Activated CD8-positive, alpha-beta T cell treated with anti-CD3 and anti-CD28 coated beads, Interleukin-2, amount 10 ng/mL, durations not matched to agents 7 days and 5 days (primary cell): ENCODE measurements at regions of chr16 and their contacts with region 1.

Region 1: GRCh38 chr16:10918294-10919002 is 23.8 kb downstream of the DEXI start:
- DNase-seq: peak; percentile 89
- ATAC-seq: peak; percentile 83
- H3K4me3 Mint-ChIP-seq: no peak overlapping the region
- H3K27ac Mint-ChIP-seq: no peak overlapping the region
- H3K4me1 Mint-ChIP-seq: peaks cover 6% of the 10 kb centered on the region
- H3K27me3 Mint-ChIP-seq: no peaks in the 10 kb centered on the region

Region 2: GRCh38 chr16:10509534-10510025 is 408.9 kb before region 1 on chr16:
- CTCF ChIA-PET with region 1: interaction called, 12 read pairs
- POLR2A ChIA-PET with region 1: no interaction called
- DNase-seq: peak; percentile 78
- ATAC-seq: peak; percentile 92
- H3K4me3 Mint-ChIP-seq: no peak overlapping the region
- H3K27ac Mint-ChIP-seq: no peak overlapping the region
- H3K4me1 Mint-ChIP-seq: no peaks in the 10 kb centered on the region
- H3K27me3 Mint-ChIP-seq: peaks cover 8% of the 10 kb centered on the region

Region 3: GRCh38 chr16:10737068-10737625 is 181.3 kb before region 1 on chr16:
- CTCF ChIA-PET with region 1: interaction called, 15 read pairs
- POLR2A ChIA-PET with region 1: no interaction called
- DNase-seq: peak; percentile 82
- ATAC-seq: peak; percentile 49
- H3K4me3 Mint-ChIP-seq: peak overlapping the region; percentile 48
- H3K27ac Mint-ChIP-seq: peak overlapping the region; percentile 63
- H3K4me1 Mint-ChIP-seq: peaks cover 42% of the 10 kb centered on the region
- H3K27me3 Mint-ChIP-seq: no peaks in the 10 kb centered on the region

Region 4: GRCh38 chr16:10743610-10744393 is 174.6 kb before region 1 on chr16 and contains the start of gene NUBP1:
- CTCF ChIA-PET with region 1: interaction called, 18 read pairs
- POLR2A ChIA-PET with region 1: no interaction called
- DNase-seq: peak; percentile 99
- ATAC-seq: peak; percentile 91
- H3K4me3 Mint-ChIP-seq: peak within 1 kb of the TSS; percentile 95
- H3K27ac Mint-ChIP-seq: peak within 1 kb of the TSS; percentile 99
- H3K4me1 Mint-ChIP-seq: peaks cover 54% of the 10 kb centered on the region
- H3K27me3 Mint-ChIP-seq: no peaks in the 10 kb centered on the region
- total RNA-seq, gene NUBP1: 24.9 to 28.4 TPM

Region 5: GRCh38 chr16:10876799-10877341 is 41.6 kb before region 1 on chr16 and contains the start of gene CIITA:
- CTCF ChIA-PET with region 1: interaction called, 19 read pairs
- POLR2A ChIA-PET with region 1: no interaction called
- DNase-seq: peak; percentile 84
- ATAC-seq: peak; percentile 59
- H3K4me3 Mint-ChIP-seq: peak within 1 kb of the TSS; percentile 96
- H3K27ac Mint-ChIP-seq: peak within 1 kb of the TSS; percentile 76
- H3K4me1 Mint-ChIP-seq: peaks cover 91% of the 10 kb centered on the region
- H3K27me3 Mint-ChIP-seq: peaks cover 17% of the 10 kb centered on the region
- total RNA-seq, gene CIITA: 23.3 to 23.6 TPM

Region 6: GRCh38 chr16:10888320-10888937 is 30.0 kb before region 1 on chr16:
- CTCF ChIA-PET with region 1: no interaction called
- POLR2A ChIA-PET with region 1: no interaction called
- DNase-seq: no peak
- ATAC-seq: no peak
- H3K4me3 Mint-ChIP-seq: no peak overlapping the region
- H3K27ac Mint-ChIP-seq: no peak overlapping the region
- H3K4me1 Mint-ChIP-seq: peaks cover 18% of the 10 kb centered on the region
- H3K27me3 Mint-ChIP-seq: peaks cover 7% of the 10 kb centered on the region

Region 7: GRCh38 chr16:10906914-10907756 is 11.3 kb before region 1 on chr16:
- CTCF ChIA-PET with region 1: interaction called, 12 read pairs
- POLR2A ChIA-PET with region 1: no interaction called
- DNase-seq: no peak
- ATAC-seq: no peak
- H3K4me3 Mint-ChIP-seq: no peak overlapping the region
- H3K27ac Mint-ChIP-seq: no peak overlapping the region
- H3K4me1 Mint-ChIP-seq: no peaks in the 10 kb centered on the region
- H3K27me3 Mint-ChIP-seq: no peaks in the 10 kb centered on the region